ENCODE measurements at regions of chr3 and their contacts with region 1.

Region 1: GRCh38 chr3:11803977-11804892 is 42.5 kb downstream of the TAMM41 start:
- DNase-seq: no peak
- H3K4me3 ChIP-seq: no peak overlapping the region
- H3K27ac ChIP-seq: no peak overlapping the region
- H3K4me1 ChIP-seq: peaks cover 0 to 15% (median 6%) of the 10 kb centered on the region in 4 donors
- H3K27me3 ChIP-seq: no peaks in the 10 kb centered on the region
- CTCF ChIP-seq: peak; percentile 36 to 69 (median 67)
- EP300 ChIP-seq: no peak
- POLR2A ChIP-seq: no peak

Region 2: DNA sequence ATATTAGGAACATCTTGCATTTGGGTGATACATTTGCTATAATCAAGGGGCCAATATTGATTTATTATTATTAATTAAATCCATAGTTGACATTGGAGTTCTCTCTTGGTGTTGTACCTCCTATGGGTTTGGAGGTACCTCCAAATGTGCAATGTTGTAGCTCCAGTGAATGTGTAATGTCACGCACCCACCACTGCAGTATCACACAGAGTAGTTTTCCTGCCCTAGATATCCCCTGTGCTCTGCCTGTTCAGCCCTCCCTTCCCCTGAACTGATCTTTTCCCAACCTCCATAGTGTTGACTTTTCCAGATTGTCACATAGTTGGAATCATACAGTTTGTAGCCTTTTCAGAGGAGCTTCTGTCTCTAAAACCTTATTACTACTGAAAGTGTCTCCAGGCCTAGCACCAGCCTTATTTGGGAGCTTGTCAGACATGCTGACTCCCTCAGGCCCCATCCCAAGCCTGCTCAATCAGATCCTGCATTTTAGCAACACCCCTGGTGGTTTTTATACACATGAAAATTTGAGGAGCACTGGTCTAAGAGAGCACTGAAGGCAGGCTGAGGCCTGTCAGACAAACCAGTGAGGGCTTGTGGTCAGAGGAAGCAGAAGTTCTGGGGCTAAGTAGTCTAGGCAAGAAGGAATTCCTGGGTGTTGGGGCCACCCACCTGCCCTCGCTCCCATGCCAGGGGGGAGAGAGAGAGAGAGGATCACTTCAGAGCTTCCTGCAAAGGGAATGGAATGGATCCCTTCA is 914.9 kb before region 1 on chr3:
- intact Hi-C with region 1: no loop called
- DNase-seq: no peak
- H3K4me3 ChIP-seq: no peak overlapping the region
- H3K27ac ChIP-seq: no peak overlapping the region
- H3K4me1 ChIP-seq: no peaks in the 10 kb centered on the region
- H3K27me3 ChIP-seq: no peaks in the 10 kb centered on the region
- CTCF ChIP-seq: no peak
- EP300 ChIP-seq: no peak
- POLR2A ChIP-seq: no peak

Region 3: DNA sequence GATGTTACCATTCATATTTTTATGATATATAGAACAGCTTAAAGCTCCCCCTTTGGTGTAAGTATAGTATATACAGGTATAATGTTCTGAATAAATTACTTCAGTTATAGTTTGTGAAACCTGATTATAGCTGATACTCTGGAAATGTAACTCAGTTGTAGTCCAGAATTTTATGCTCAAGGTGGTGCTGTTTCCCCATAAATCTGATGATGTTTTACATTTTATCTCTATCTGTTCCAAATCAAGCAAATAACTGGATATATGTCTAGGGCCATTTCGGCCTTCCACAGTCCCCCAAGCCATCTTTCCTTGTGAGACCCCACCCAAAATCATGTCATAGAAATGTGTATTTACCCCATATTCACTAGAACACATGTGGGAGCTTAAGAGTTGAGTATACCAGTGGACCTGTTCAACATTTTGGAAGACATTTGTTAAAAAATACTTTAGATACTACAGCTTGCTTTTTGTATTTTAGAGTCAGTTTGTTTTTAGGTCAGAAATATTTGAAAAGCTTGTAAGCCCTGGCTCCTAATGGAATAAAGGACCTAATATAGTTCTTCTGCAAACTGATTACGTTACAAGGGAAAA is 424.9 kb before region 1 on chr3:
- intact Hi-C with region 1: loop called (anchors 1 kb)
- DNase-seq: no peak
- H3K4me3 ChIP-seq: no peak overlapping the region
- H3K27ac ChIP-seq: peak overlapping the region in 3 of 4 donors; percentile 15 to 53 (median 33)
- H3K4me1 ChIP-seq: peaks cover 0 to 31% (median 17%) of the 10 kb centered on the region in 4 donors
- H3K27me3 ChIP-seq: no peaks in the 10 kb centered on the region
- CTCF ChIP-seq: peak; percentile 56 to 61 (median 60)
- EP300 ChIP-seq: no peak
- POLR2A ChIP-seq: no peak

Region 4: DNA sequence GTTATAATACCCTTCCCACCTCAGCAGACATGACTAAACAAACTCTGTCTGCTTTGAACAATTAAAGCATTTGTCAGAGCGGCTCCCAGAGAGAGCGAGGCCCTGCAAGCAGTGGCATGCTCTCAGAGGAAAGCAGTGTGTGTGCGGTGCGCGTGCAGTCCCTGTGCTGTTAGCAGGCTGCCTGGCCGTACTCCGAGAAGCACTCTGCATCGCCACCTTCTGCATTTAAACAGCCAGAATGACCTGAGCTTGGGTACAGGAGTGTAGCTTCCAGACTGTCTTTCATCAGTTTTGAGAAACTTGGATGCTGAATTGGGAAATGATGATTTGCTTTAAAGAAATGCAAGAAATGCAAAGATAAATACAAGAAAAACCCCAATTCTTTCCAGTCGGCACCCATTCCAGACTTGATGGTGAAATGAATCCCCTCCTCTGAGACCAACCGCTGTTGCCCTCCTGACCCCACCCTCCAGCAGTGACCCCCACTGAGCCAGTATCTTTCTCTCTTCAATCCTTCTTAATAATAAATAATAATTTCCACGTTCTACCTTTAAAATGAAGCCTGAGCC is 274.0 kb before region 1 on chr3:
- intact Hi-C with region 1: no loop called
- DNase-seq: peak; percentile 83
- H3K4me3 ChIP-seq: no peak overlapping the region
- H3K27ac ChIP-seq: peak overlapping the region in 3 of 4 donors; percentile 6 to 60 (median 24)
- H3K4me1 ChIP-seq: peaks cover 0 to 25% (median 17%) of the 10 kb centered on the region in 4 donors
- H3K27me3 ChIP-seq: no peaks in the 10 kb centered on the region
- CTCF ChIP-seq: no peak
- EP300 ChIP-seq: no peak
- POLR2A ChIP-seq: no peak

Region 5: GRCh38 chr3:11651900-11652299 is 152.3 kb before region 1 on chr3:
- intact Hi-C with region 1: loop called (anchors 5 kb)
- DNase-seq: no peak
- H3K4me3 ChIP-seq: no peak overlapping the region
- H3K27ac ChIP-seq: no peak overlapping the region
- H3K4me1 ChIP-seq: peaks cover 0 to 8% (median 4%) of the 10 kb centered on the region in 4 donors
- H3K27me3 ChIP-seq: no peaks in the 10 kb centered on the region
- CTCF ChIP-seq: peak; percentile 30 to 47 (median 41)
- EP300 ChIP-seq: no peak
- POLR2A ChIP-seq: no peak

Region 6: GRCh38 chr3:11719406-11720230 is 84.6 kb before region 1 on chr3:
- intact Hi-C with region 1: loop called (anchors 10 kb)
- DNase-seq: peak; percentile 85
- H3K4me3 ChIP-seq: peak overlapping the region; percentile 74 to 92 (median 80)
- H3K27ac ChIP-seq: peak overlapping the region; percentile 91 to 94 (median 94)
- H3K4me1 ChIP-seq: peaks cover 0 to 26% (median 22%) of the 10 kb centered on the region in 4 donors
- H3K27me3 ChIP-seq: no peaks in the 10 kb centered on the region
- CTCF ChIP-seq: no peak
- EP300 ChIP-seq: no peak
- POLR2A ChIP-seq: no peak

Region 7: DNA sequence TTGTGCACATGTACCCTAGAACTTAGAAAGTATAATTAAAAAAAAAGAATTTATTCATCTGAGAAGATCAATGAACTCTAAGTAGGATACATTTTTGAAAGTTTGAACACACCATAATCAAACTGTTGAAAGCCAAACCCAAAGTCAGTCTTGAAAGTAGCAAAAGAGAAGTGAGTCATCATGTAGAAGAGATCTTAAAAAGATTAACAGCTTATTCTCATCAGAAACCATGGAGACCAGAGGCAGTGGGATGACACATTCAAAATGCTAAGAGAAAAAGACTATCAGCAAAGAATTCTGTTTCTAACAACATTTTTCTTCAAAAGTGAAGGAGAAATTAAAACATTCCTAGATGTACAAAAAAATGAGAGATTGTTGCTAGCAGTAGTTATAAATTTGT is 293.7 kb after region 1 on chr3:
- intact Hi-C with region 1: no loop called
- DNase-seq: no peak
- H3K4me3 ChIP-seq: no peak overlapping the region
- H3K27ac ChIP-seq: no peak overlapping the region
- H3K4me1 ChIP-seq: no peaks in the 10 kb centered on the region
- H3K27me3 ChIP-seq: no peaks in the 10 kb centered on the region
- CTCF ChIP-seq: no peak
- EP300 ChIP-seq: no peak
- POLR2A ChIP-seq: no peak